GM12878 (cell line): ENCODE measurements at regions of chr10 and their contacts with region 1.

Region 1: GRCh38 chr10:31581741-31582313 is 262.8 kb downstream of the ZEB1 start:
- DNase-seq: peak; percentile 58
- ATAC-seq: peak; percentile 89
- H3K4me3 ChIP-seq: no peak overlapping the region
- H3K27ac ChIP-seq: no peak overlapping the region
- H3K4me1 ChIP-seq: peaks cover 10% of the 10 kb centered on the region; the same call in 1 of the 2 replicates
- H3K27me3 ChIP-seq: no peaks in the 10 kb centered on the region
- CTCF ChIP-seq: peak in 1 of 3 experiments; percentile 6; a peak in 1 of 6 replicates
- EP300 ChIP-seq: peak in 1 of 2 experiments; percentile 35; a peak in 1 of 4 replicates
- POLR2A ChIP-seq: no peak
- RAD21 ChIP-seq: peak; percentile 40; the same call in 1 of the 2 replicates

Region 2: GRCh38 chr10:31426401-31426800 is 155.4 kb before region 1 on chr10:
- CTCF ChIA-PET with region 1: no interaction called
- POLR2A ChIA-PET with region 1: no interaction called
- RAD21 ChIA-PET with region 1: no interaction called
- SMC1A ChIA-PET with region 1: no interaction called
- in situ Hi-C with region 1: no loop called
- intact Hi-C with region 1: no loop called
- DNase-seq: no peak
- ATAC-seq: peak; percentile 36; the same call in 2 of the 3 replicates
- H3K4me3 ChIP-seq: no peak overlapping the region
- H3K27ac ChIP-seq: 0 out of 2 replicates have a peak overlapping the region, but pooled peaks have one; percentile 24
- H3K4me1 ChIP-seq: no peaks in the 10 kb centered on the region
- H3K27me3 ChIP-seq: no peaks in the 10 kb centered on the region
- CTCF ChIP-seq: no peak
- EP300 ChIP-seq: no peak
- POLR2A ChIP-seq: no peak
- RAD21 ChIP-seq: no peak

Region 3: GRCh38 chr10:31593124-31593523 is 11.3 kb after region 1 on chr10:
- CTCF ChIA-PET with region 1: interaction called, 4 read pairs
- POLR2A ChIA-PET with region 1: interaction called, 3 read pairs
- RAD21 ChIA-PET with region 1: interaction called, 3 read pairs
- SMC1A ChIA-PET with region 1: interaction called, 13 read pairs
- in situ Hi-C with region 1: no loop called
- intact Hi-C with region 1: no loop called
- DNase-seq: no peak
- ATAC-seq: no peak
- H3K4me3 ChIP-seq: no peak overlapping the region
- H3K27ac ChIP-seq: no peak overlapping the region
- H3K4me1 ChIP-seq: peaks cover 8% of the 10 kb centered on the region
- H3K27me3 ChIP-seq: no peaks in the 10 kb centered on the region
- CTCF ChIP-seq: no peak
- EP300 ChIP-seq: no peak
- POLR2A ChIP-seq: no peak
- RAD21 ChIP-seq: no peak

Region 4: DNA sequence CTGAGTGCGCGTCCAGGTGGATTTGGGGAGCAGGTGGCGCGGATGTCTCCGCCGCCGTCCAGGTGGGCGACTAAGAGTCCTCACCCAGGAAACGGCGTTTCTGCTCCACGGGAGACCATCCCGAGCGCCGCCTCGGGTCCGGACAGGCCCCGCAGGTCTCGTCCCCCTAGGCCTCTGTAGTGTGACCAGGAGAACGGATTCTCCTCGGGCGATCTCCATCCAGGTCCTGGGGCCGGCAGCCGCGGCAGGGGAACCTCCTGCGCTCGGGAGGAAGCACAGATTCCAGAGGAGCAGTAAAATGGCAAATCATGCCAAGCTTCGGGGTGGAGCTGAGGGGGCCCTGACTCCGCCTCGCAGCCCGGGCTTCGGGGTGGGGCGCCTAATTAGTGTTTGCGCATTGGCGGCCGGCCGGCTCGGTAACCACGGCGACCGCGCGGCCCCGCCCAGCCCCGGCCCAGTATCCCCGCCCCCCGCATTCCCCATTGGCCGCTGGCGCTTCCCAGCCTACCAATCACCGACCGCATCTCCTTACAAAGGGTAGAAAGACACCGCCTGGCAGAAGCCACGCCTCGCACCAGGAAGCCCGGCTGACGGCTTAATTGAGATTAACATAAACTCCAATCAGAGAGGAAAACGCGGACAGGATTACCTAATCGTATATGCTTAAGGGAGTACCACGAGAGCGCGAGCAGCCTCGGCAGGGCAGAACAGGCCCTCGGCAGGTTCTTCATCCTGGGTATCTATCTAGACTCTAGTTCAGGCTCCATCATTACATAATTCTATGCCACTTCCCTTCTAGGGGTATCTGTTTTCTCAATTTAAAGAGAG is 178.2 kb after region 1 on chr10:
- CTCF ChIA-PET with region 1: no interaction called
- POLR2A ChIA-PET with region 1: no interaction called
- RAD21 ChIA-PET with region 1: no interaction called
- SMC1A ChIA-PET with region 1: no interaction called
- in situ Hi-C with region 1: no loop called
- intact Hi-C with region 1: no loop called
- DNase-seq: peak; percentile 77
- ATAC-seq: peak; percentile 97
- H3K4me3 ChIP-seq: peak overlapping the region; percentile 90
- H3K27ac ChIP-seq: peak overlapping the region; percentile 79
- H3K4me1 ChIP-seq: peaks cover 3% of the 10 kb centered on the region; the same call in 1 of the 2 replicates
- H3K27me3 ChIP-seq: no peaks in the 10 kb centered on the region
- CTCF ChIP-seq: no peak
- EP300 ChIP-seq: no peak
- POLR2A ChIP-seq: peak; percentile 84
- RAD21 ChIP-seq: no peak